ENCODE measurements at regions of chr6 and their contacts with region 1.

Region 1: GRCh38 chr6:56851541-56852259 is 103.2 kb upstream of the BEND6 start:
- DNase-seq: peak; percentile 50
- H3K4me3 ChIP-seq: peak overlapping the region; percentile 6 to 45
- H3K27ac ChIP-seq: no peak overlapping the region
- H3K4me1 ChIP-seq: no peaks in the 10 kb centered on the region
- H3K27me3 ChIP-seq: no peaks in the 10 kb centered on the region
- CTCF ChIP-seq: peak; percentile 39 to 53 (median 46)
- POLR2A ChIP-seq: no peak

Region 2: DNA sequence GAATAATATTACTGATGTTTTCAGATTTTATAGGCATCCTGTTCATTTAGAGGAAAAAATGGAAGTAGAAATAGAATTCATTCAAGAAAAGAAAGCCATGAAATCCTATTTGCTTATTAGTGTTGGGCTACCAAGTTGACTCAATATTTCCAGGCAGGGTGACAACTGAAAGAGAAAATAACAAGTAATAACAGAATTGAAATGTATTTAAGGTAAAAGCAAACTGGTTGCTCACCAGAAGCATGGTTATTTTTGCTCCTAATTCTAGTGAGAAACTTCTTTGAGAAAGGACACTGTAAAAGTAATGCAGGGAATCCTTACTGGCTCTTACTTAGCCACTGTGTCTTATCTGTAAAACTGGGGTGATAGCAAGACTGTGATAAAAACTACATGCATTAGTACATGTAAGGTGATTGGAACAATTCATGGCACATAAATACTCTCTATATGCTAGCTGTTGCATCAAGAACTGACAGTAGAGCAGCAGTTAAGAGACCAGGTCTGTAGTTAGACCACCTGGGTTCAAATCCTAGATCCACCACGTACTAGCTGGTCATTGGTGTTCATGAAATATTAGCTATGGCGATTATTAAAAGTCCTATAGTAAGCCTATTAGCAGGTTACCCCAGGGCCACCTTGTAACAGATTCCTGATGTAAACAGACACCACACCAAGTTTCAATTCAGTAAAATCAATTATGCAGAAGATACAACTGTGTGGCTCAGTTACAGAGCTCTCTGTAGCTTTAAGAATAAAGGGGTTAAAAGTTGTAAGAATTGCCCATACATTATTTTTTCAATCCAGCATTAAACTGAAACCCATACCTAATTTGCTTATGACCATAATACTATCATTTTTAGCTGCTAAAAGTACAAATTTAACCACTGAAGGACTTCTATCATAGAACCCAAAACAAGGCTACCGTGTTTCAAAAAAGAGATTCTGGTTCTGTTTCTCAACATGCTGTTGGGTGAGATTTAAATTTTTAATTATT is 445.1 kb before region 1 on chr6:
- intact Hi-C with region 1: no loop called
- DNase-seq: no peak
- H3K4me3 ChIP-seq: no peak overlapping the region
- H3K27ac ChIP-seq: no peak overlapping the region
- H3K4me1 ChIP-seq: no peaks in the 10 kb centered on the region
- H3K27me3 ChIP-seq: no peaks in the 10 kb centered on the region
- CTCF ChIP-seq: no peak
- POLR2A ChIP-seq: no peak

Region 3: GRCh38 chr6:56708810-56709597 is 142.7 kb before region 1 on chr6:
- intact Hi-C with region 1: loop called (anchors 10 kb)
- DNase-seq: no peak
- H3K4me3 ChIP-seq: no peak overlapping the region
- H3K27ac ChIP-seq: no peak overlapping the region
- H3K4me1 ChIP-seq: no peaks in the 10 kb centered on the region
- H3K27me3 ChIP-seq: no peaks in the 10 kb centered on the region
- CTCF ChIP-seq: peak in 1 of 3 experiments; percentile 68
- POLR2A ChIP-seq: no peak

Region 4: DNA sequence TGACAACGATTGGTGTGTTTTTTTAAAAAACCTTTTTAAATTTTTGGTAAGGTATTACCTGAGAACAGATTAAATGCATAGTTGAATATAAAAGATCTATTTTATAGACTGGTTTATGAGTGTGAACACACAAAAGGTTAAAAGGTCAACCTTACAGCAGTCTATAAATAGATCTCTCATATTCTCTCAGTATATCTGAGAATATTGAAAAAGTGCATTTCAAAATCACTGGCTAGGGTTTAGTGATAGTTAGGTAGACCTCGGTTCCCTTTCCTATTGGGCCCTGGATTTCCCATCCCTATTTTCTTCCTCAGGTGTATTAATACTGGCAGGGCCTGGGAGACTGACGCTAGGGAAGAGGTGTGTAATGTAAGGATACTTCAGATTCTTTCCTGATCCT is 237.6 kb after region 1 on chr6:
- intact Hi-C with region 1: no loop called
- DNase-seq: no peak
- H3K4me3 ChIP-seq: peak overlapping the region; percentile 70 to 77
- H3K27ac ChIP-seq: peak overlapping the region in 1 of 2 donors; percentile 88
- H3K4me1 ChIP-seq: peaks cover 14% of the 10 kb centered on the region
- H3K27me3 ChIP-seq: no peaks in the 10 kb centered on the region
- CTCF ChIP-seq: no peak
- POLR2A ChIP-seq: no peak